Activated naive CD4-positive, alpha-beta T cell treated with anti-CD3 and anti-CD28 coated beads, Interleukin-2, amount 10 ng/mL, durations not matched to agents 7 days and 5 days (primary cell): ENCODE measurements at regions of chr17 and their contacts with region 1.

Region 1: GRCh38 chr17:8016632-8017478 is 14.4 kb downstream of the GUCY2D start:
- DNase-seq: peak; percentile 76
- H3K4me3 Mint-ChIP-seq: peak overlapping the region; percentile 62
- H3K27ac Mint-ChIP-seq: no peak overlapping the region
- H3K4me1 Mint-ChIP-seq: peaks cover 8% of the 10 kb centered on the region
- H3K27me3 Mint-ChIP-seq: peaks cover 97% of the 10 kb centered on the region

Region 2: DNA sequence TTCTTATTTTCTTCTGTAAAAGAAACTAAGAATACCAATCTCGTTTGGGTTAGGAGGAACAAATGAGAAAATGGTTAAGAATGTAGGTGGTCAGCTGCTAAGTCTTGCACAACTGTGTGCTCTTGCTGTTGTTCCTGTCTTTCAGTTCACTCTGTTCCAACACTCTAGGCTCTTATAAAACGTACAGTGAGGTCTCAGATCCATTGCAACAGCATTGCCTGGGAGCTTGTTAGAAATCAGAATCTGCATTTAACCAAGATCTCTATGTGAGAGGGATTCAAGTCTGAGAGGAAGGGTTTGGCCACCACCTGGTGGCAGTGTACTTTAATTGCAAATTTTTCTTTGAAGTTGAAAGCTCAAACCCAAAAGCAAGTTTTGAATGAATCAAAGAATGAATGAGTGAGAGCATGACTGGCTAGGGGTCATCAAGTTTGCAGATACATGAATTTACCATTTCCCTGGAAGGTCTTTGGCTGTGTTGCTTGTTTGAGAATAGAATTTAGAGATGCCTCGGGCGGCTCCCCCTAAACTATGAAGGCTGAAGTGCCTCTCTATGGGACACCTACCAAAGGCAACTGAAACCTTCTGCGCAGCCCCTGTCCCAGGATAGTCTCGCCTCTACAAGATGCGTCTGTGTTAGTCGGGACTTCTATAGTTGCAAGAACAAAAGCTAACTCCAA is 24.5 kb after region 1 on chr17:
- CTCF ChIA-PET with region 1: interaction called, 27 read pairs
- DNase-seq: peak; percentile 67
- H3K4me3 Mint-ChIP-seq: no peak overlapping the region
- H3K27ac Mint-ChIP-seq: no peak overlapping the region
- H3K4me1 Mint-ChIP-seq: no peaks in the 10 kb centered on the region
- H3K27me3 Mint-ChIP-seq: peaks cover 59% of the 10 kb centered on the region

Region 3: DNA sequence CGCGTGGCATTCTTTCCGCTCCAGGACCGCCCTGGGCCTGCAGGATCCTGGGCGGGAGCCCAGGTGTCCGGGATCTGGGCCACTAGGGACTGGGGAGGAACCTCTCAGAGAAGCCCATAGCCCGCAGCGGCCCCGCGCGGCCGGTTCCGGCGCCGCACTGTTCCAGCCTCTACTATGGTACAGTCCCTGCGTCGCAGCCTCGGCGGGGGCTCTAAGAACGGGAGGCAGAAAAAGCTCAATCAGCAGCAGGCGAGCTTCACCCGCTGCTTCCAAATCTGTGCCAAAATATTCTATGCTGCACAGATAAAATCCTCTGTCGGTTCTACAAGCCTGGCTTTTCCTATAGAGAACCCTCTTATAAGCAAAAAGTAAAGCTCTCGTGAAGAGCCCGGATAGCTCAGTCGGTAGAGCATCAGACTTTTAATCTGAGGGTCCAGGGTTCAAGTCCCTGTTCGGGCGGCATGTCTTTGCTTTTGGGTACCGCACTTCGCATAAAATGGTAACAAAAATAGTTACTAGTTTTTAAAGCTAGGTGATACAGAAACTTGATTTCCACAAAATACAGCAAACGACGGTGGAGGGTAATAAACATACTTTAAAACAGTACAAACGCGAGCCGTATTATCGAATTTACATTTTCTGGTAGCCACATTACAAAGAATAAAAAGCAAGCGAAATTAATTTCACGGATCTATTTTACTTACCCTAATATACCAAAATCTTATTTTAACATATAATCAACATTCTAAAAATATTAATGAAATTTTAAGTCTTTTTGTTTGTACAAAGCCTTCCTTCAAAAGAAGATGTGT is 102.1 kb after region 1 on chr17:
- CTCF ChIA-PET with region 1: no interaction called
- DNase-seq: peak; percentile 89
- H3K4me3 Mint-ChIP-seq: peak overlapping the region; percentile 86
- H3K27ac Mint-ChIP-seq: peak overlapping the region; percentile 94
- H3K4me1 Mint-ChIP-seq: peaks cover 59% of the 10 kb centered on the region
- H3K27me3 Mint-ChIP-seq: peaks cover 91% of the 10 kb centered on the region

Region 4: DNA sequence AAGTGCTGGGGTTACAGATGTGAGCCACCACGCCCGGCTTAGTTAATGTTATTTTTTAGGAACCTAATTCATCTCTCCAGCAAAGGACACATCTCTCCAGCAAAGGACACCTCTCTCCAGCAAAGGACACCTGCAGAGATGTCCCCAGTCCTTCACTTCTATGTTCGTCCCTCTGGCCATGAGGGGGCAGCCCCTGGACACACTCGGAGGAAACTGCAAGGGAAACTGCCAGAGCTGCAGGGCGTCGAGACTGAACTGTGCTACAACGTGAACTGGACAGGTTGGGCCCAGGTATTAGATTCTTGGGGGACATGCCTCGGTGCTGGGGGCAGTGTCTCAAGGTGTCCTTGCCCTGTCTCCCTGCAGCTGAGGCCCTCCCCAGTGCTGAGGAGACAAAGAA is 236.9 kb after region 1 on chr17:
- CTCF ChIA-PET with region 1: no interaction called
- DNase-seq: no peak
- H3K4me3 Mint-ChIP-seq: no peak overlapping the region
- H3K27ac Mint-ChIP-seq: no peak overlapping the region
- H3K4me1 Mint-ChIP-seq: peaks cover 18% of the 10 kb centered on the region
- H3K27me3 Mint-ChIP-seq: no peaks in the 10 kb centered on the region

Region 5: DNA sequence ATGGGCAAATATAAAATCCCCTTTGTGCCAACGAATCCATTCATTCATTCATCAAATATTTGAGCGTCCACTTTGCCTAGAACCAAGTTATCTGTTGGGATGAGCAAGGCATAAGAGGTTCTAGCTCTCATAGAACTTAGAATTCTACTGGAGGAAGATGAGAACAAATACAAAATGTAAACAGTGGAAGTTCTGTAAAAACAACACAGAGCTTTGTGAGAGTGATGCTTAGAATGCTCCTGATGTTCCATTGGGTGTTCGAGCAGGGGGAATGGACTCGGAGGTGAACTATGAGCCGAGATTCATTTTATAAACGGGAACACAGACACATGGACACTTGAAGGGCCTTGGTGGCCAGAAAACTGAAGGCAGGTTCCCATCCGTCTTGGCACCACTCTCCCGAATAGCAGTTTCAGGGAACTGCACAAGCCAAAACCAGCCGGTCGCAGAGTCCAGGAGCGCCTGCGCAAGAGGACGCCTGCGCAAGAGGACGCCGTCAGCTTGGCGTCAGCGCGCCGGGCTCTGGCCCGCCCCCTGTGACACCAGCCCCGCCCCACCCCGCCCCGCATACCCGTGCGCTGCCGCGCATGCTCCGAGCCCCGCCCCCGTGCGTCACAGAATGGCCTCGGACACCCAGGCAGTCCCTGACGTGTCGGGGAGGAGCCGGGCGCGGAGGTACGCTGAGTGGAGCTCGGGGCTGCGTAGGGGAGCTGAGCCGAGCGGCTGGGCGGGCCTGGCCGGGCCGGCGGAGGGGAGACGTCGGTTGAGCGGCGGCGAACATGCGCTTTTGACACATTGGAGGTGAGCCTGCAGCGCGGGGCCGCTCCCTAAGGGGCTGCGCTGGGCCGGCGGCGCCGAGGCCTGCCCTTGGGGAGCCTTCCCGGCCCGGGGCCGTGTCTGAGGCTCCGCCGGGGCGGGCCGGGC is 418.7 kb after region 1 on chr17 and contains the start of gene NDEL1:
- CTCF ChIA-PET with region 1: no interaction called
- DNase-seq: peak; percentile 100
- H3K4me3 Mint-ChIP-seq: peak within 1 kb of the TSS; percentile 91
- H3K27ac Mint-ChIP-seq: peak within 1 kb of the TSS; percentile 98
- H3K4me1 Mint-ChIP-seq: peaks cover 33% of the 10 kb centered on the region
- H3K27me3 Mint-ChIP-seq: peaks cover 6% of the 10 kb centered on the region